ENCODE measurements at regions of chr4 and their contacts with region 1.

Region 1: GRCh38 chr4:154314248-154314647 is 177.4 kb downstream of the DCHS2 start:
- DNase-seq: no peak
- H3K4me3 ChIP-seq: no peak overlapping the region
- H3K27ac ChIP-seq: no peak overlapping the region
- H3K4me1 ChIP-seq: no peaks in the 10 kb centered on the region
- H3K27me3 ChIP-seq: no peaks in the 10 kb centered on the region
- CTCF ChIP-seq: no peak

Region 2: GRCh38 chr4:153785910-153786721 is 528.1 kb before region 1 on chr4:
- intact Hi-C with region 1: loop called (anchors 10 kb)
- DNase-seq: no peak
- H3K4me3 ChIP-seq: no peak overlapping the region
- H3K27ac ChIP-seq: no peak overlapping the region
- H3K4me1 ChIP-seq: peaks cover 4 to 19% of the 10 kb centered on the region in 2 donors
- H3K27me3 ChIP-seq: peaks cover 23% of the 10 kb centered on the region
- CTCF ChIP-seq: peak in 1 of 3 experiments; percentile 14

Region 3: DNA sequence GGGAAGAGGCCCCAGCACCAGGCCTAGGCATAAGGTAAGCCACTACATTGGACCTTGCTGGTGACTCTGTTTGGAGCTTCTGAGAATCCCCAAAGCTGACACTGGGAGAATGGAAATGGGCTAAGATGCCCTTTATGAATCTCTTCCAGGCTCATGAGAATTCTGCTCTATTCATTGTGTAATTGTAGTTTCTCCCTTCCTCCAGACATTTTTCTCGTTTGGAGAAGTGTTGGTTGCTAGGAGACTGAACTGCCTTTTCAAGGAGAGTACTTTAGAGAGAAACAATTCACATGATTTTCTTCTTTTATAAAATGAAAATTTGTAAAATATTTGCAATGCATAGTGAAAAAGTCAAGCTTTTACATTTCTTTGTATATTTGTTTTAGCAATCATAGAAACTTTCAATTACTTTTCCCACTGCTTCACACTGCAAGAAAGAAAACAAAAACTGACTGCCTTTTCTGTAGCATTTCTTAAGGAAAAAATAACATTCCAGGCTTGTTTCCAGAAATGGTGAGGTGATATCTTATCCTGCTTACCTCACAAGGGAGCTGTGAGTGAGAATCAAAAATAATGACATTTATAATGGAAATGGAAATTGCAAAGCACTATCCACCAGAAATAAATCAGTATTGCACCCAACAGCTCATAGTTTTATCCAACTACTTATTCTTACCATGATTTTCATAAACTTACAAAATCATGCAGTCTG is 202.2 kb after region 1 on chr4:
- intact Hi-C with region 1: no loop called
- DNase-seq: no peak
- H3K4me3 ChIP-seq: no peak overlapping the region
- H3K27ac ChIP-seq: no peak overlapping the region
- H3K4me1 ChIP-seq: no peaks in the 10 kb centered on the region
- H3K27me3 ChIP-seq: no peaks in the 10 kb centered on the region
- CTCF ChIP-seq: no peak

Measured in ascending aorta (tissue), 2 donors.